GM12878 (cell line): ENCODE measurements at regions of chr1 and their contacts with region 1.

Region 1: GRCh38 chr1:20493839-20494608 is 8.0 kb upstream of the CAMK2N1 start:
- DNase-seq: peak; percentile 51
- ATAC-seq: peak; percentile 95
- H3K4me3 ChIP-seq: no peak overlapping the region
- H3K27ac ChIP-seq: no peak overlapping the region
- H3K4me1 ChIP-seq: no peaks in the 10 kb centered on the region
- H3K27me3 ChIP-seq: no peaks in the 10 kb centered on the region; a peak in 1 of 4 replicates
- CTCF ChIP-seq: peak; percentile 95 to 99 (median 99); a peak in 5 of 6 replicates
- EP300 ChIP-seq: no peak
- POLR2A ChIP-seq: no peak
- RAD21 ChIP-seq: peak; percentile 99

Region 2: DNA sequence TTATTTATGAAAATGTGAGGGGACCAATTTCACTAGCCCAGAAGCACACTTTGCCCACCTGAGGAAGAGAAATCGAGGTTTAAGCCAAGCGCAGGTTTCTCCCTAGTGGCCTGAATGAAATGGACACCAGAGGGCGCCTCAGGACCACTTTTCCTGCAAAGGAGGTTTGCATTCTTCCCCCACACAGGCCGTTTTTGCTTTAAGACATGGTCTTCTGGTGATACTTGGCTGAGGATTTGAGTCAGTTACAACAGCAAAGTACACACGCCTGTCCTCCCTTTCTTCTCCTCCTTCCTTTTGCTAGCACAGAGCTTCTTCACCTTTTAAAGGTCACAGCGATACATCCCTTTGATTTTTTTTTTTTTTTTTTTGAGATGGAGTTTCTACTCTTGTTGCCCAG is 576.0 kb before region 1 on chr1:
- CTCF ChIA-PET with region 1: interaction called, 5 read pairs
- POLR2A ChIA-PET with region 1: no interaction called
- RAD21 ChIA-PET with region 1: no interaction called
- SMC1A ChIA-PET with region 1: interaction called, 3 read pairs
- in situ Hi-C with region 1: loop called (anchors 10 kb)
- intact Hi-C with region 1: loop called (anchors 5 kb)
- DNase-seq: peak; percentile 33
- ATAC-seq: peak; percentile 94
- H3K4me3 ChIP-seq: no peak overlapping the region
- H3K27ac ChIP-seq: no peak overlapping the region
- H3K4me1 ChIP-seq: no peaks in the 10 kb centered on the region
- H3K27me3 ChIP-seq: no peaks in the 10 kb centered on the region
- CTCF ChIP-seq: peak; percentile 80 to 98 (median 91); a peak in 5 of 6 replicates
- EP300 ChIP-seq: no peak
- POLR2A ChIP-seq: no peak
- RAD21 ChIP-seq: peak; percentile 98

Region 3: GRCh38 chr1:20212685-20213331 is 281.2 kb before region 1 on chr1:
- CTCF ChIA-PET with region 1: interaction called, 47 read pairs
- POLR2A ChIA-PET with region 1: no interaction called
- RAD21 ChIA-PET with region 1: interaction called, 14 read pairs
- SMC1A ChIA-PET with region 1: interaction called, 5 read pairs
- in situ Hi-C with region 1: loop called (anchors 5 kb)
- intact Hi-C with region 1: loop called (anchors 1 kb)
- DNase-seq: no peak
- ATAC-seq: peak; percentile 89
- H3K4me3 ChIP-seq: no peak overlapping the region
- H3K27ac ChIP-seq: no peak overlapping the region
- H3K4me1 ChIP-seq: no peaks in the 10 kb centered on the region; the same call in 1 of the 2 replicates
- H3K27me3 ChIP-seq: peaks cover 3 to 10% of the 10 kb centered on the region in 2 experiments; a peak in 2 of 4 replicates
- CTCF ChIP-seq: peak; percentile 67 to 72 (median 71)
- EP300 ChIP-seq: no peak
- POLR2A ChIP-seq: no peak
- RAD21 ChIP-seq: peak; percentile 77

Region 4: GRCh38 chr1:20361806-20362640 is 132.0 kb before region 1 on chr1:
- CTCF ChIA-PET with region 1: interaction called, 25 read pairs
- POLR2A ChIA-PET with region 1: no interaction called
- RAD21 ChIA-PET with region 1: no interaction called
- SMC1A ChIA-PET with region 1: interaction called, 3 read pairs
- in situ Hi-C with region 1: no loop called
- intact Hi-C with region 1: no loop called
- DNase-seq: no peak
- ATAC-seq: no peak
- H3K4me3 ChIP-seq: no peak overlapping the region
- H3K27ac ChIP-seq: no peak overlapping the region
- H3K4me1 ChIP-seq: peaks cover 6% of the 10 kb centered on the region; the same call in 1 of the 2 replicates
- H3K27me3 ChIP-seq: peaks cover 1 to 7% of the 10 kb centered on the region in 2 experiments
- CTCF ChIP-seq: peak; percentile 51 to 77 (median 73)
- EP300 ChIP-seq: no peak
- POLR2A ChIP-seq: no peak
- RAD21 ChIP-seq: peak; percentile 52

Region 5: DNA sequence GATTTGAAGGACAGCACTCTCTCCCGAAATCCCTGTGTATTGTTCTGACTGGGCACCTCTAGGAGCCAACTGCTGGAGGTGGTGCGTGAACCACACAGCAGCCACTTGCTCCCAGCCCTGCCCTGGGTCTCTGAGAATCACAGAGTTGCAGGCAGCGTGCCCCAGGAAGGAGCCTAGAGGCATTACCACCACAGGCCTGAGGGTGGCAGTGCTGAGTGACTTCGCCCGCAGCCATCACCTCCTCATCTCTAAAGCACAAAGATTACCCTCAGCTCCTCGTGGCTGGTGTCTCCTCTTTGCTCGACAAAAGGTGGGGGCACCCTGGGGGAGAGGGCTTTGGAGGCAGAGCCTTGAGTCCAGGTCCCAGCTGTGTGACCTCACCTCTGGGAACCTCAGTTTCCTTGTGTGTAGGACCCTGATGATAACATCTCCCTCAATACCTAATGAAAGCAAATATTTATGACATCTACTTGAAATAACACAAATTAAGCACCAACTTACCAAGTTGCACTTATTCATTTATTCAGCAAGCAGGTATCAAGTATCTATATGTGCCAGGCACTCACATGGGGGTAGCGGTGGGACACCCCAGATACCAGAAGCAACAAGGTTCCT is 117.0 kb before region 1 on chr1:
- CTCF ChIA-PET with region 1: interaction called, 5 read pairs
- POLR2A ChIA-PET with region 1: no interaction called
- RAD21 ChIA-PET with region 1: no interaction called
- SMC1A ChIA-PET with region 1: interaction called, 7 read pairs
- in situ Hi-C with region 1: loop called (anchors 5 kb)
- intact Hi-C with region 1: loop called (anchors 1 kb)
- DNase-seq: no peak
- ATAC-seq: peak; percentile 89
- H3K4me3 ChIP-seq: no peak overlapping the region
- H3K27ac ChIP-seq: no peak overlapping the region
- H3K4me1 ChIP-seq: peaks cover 4% of the 10 kb centered on the region; the same call in 1 of the 2 replicates
- H3K27me3 ChIP-seq: 0 out of 4 replicates have a peak, but pooled peaks cover 0 to 4% of the 10 kb centered on the region in 2 experiments
- CTCF ChIP-seq: peak; percentile 75 to 89 (median 84)
- EP300 ChIP-seq: no peak
- POLR2A ChIP-seq: no peak
- RAD21 ChIP-seq: peak; percentile 50

Region 6: DNA sequence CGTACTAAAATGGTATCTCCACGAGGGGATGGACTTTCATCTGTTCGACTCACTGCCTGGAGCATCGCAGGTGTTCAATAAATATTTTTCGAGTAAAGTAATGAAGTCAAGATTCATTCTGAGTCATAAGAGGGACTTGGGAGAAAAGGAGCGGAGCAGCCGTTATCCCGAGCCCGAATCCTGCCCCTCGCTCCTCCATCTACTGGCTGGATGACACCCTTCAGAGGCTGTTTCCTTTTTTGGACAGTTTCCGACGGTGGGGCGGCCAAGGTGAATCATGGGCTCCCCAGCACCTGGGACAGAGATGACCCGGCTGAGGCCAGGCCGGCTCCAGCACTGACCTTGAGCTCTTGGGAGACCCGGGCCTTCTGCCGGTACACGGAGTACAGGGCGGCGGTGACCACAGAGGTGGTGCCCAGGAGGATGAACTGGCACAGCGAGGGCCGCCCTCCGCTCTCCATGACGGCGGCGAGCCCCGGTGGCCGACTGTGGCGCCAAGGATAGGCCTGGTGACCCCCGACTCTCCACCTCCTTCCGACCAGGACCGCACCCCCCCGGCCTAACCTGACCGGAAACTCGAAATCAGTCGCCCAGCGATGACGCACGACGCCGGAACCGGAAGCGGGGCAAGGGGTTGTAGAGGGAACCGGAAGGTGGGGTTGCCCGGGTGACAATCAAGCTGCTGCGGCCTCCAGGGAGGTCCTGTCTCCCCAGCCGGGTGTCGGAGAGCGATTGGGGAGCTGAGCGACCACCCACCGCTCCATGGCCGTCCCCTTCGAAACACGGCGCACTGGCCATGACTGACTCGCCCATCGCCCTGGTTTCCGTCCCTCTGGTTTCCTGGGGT is 13.8 kb after region 1 on chr1 and contains the start of gene MUL1:
- CTCF ChIA-PET with region 1: interaction called, 12 read pairs
- POLR2A ChIA-PET with region 1: no interaction called
- RAD21 ChIA-PET with region 1: no interaction called
- SMC1A ChIA-PET with region 1: interaction called, 4 read pairs
- in situ Hi-C with region 1: no loop called
- intact Hi-C with region 1: no loop called
- DNase-seq: peak; percentile 66
- ATAC-seq: peak; percentile 97
- H3K4me3 ChIP-seq: peak within 1 kb of the TSS; percentile 97
- H3K27ac ChIP-seq: peak within 1 kb of the TSS; percentile 79
- H3K4me1 ChIP-seq: no peaks in the 10 kb centered on the region
- H3K27me3 ChIP-seq: no peaks in the 10 kb centered on the region
- CTCF ChIP-seq: no peak
- EP300 ChIP-seq: 0 out of 4 replicates have a peak, but pooled peaks of 1 of the 2 experiments have one; percentile 35
- POLR2A ChIP-seq: peak; percentile 87
- RAD21 ChIP-seq: no peak
- polyA plus RNA-seq, gene MUL1: 4.9 to 8.1 TPM

Region 7: DNA sequence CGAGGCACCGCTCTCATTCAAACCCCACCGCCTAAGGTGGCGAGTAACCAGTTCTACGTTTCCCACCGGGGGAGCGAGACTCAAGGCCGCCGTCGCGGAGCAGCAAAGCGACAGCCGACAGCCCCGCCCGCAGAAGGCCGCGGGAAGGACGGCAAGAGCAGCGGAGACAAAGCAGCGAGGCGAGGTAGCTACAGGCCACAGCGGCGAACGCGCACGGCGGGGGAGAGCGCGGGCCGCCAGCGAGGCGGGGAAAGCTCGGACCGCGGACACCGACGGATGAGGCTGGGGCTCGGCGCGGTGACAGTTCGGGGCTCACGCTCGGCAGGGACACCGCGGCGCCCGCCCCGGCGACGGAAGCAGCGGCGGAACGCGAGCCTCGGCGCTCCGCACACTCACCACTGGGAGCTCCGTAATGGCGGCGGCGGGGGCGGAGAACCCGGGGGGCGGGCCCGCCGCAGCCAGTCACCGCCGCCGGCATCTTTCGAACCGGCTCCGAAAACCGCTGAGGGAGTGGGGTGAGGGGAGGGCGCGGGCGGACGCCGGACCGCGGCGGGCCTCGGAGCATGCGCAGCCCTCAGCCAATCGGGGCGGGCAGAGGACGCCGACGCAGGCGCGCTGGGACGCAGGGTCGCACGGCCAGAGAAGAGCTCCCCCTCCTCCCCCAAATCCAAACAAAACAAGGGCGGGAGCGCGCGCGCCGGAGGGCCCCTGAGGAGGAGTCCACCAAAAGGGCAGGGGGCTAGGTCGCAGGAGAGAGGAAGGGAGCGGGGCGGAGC is 292.4 kb after region 1 on chr1:
- CTCF ChIA-PET with region 1: no interaction called
- POLR2A ChIA-PET with region 1: no interaction called
- RAD21 ChIA-PET with region 1: no interaction called
- SMC1A ChIA-PET with region 1: no interaction called
- in situ Hi-C with region 1: no loop called
- intact Hi-C with region 1: no loop called
- DNase-seq: peak; percentile 82
- ATAC-seq: peak; percentile 91
- H3K4me3 ChIP-seq: peak overlapping the region; percentile 79
- H3K27ac ChIP-seq: peak overlapping the region; percentile 90
- H3K4me1 ChIP-seq: peaks cover 9% of the 10 kb centered on the region; the same call in 1 of the 2 replicates
- H3K27me3 ChIP-seq: no peaks in the 10 kb centered on the region
- CTCF ChIP-seq: 0 out of 6 replicates have a peak, but pooled peaks of 1 of the 3 experiments have one; percentile 4
- EP300 ChIP-seq: no peak; a peak in 1 of 4 replicates
- POLR2A ChIP-seq: peak; percentile 92
- RAD21 ChIP-seq: no peak